AG04449 (cell line): ENCODE measurements at regions of chr7 and their contacts with region 1.

Region 1: GRCh38 chr7:134432296-134433152 is 26.4 kb downstream of the AKR1B1 start:
- DNase-seq: no peak
- H3K4me3 ChIP-seq: peak overlapping the region; percentile 53
- CTCF ChIP-seq: peak; percentile 74

Region 2: DNA sequence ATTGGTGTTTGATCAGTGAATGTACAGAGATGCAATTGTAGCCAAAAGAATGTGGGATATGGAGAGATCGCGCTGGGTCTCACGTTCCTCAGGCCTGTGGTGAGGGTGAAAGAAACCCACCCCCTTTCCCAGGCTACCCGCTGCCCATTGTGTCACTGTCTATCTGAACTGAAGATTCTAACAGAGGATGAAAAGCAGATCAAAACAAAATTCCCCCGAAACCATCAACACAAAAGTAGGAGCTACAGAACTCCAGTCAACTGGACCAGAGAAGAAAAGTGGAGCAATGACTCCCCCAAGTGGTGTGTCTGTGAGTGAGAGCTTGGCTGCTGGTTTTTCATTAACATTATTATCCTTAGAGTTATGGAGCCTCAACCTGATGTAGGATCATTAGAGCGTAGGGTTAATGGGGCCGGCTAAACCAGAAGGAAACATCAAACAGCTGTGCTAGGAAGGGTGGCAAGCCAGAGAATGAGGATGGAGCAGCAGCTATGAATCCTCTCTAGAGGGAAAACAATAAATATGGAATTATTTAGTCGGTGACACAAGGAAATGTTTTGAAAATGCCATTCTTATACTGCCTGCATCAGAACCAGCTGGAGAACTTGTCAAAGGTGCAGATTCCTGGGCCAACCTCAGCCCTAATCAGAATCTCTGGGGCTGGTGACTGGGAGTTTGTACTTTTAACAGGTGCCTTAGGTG is 11.9 kb before region 1 on chr7:
- CTCF ChIA-PET with region 1: interaction called, 34 read pairs
- POLR2A ChIA-PET with region 1: no interaction called
- DNase-seq: no peak
- H3K4me3 ChIP-seq: no peak overlapping the region
- CTCF ChIP-seq: peak; percentile 55

Region 3: GRCh38 chr7:134458806-134459698 is 26.5 kb after region 1 on chr7 and contains the start of gene AKR1B1:
- CTCF ChIA-PET with region 1: interaction called, 43 read pairs
- POLR2A ChIA-PET with region 1: no interaction called
- DNase-seq: peak; percentile 45
- H3K4me3 ChIP-seq: peak within 1 kb of the TSS; percentile 91
- CTCF ChIP-seq: peak; percentile 85

Region 4: GRCh38 chr7:134480736-134481135 is 48.2 kb after region 1 on chr7:
- CTCF ChIA-PET with region 1: interaction called, 92 read pairs
- POLR2A ChIA-PET with region 1: no interaction called
- DNase-seq: no peak
- H3K4me3 ChIP-seq: no peak overlapping the region
- CTCF ChIP-seq: no peak

Region 5: DNA sequence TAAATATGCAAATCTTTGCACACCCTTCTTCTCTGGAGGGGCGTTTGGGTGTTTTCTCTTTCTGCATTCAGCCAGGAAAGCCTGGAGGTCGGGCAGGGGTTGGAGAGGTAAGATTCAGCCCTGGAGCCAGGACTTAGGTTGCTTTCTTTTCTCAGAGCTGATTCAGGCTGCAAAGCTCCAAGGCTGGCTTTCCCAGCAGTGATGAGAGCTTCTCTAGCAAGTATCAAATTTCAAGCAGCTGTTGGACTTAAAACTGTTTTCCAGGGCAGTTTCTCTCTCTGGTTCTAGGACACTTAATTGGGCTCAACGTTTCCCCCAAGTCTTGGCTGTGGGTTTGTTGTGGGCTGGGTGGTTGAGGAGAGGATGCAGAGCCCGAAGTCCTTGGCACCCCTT is 95.5 kb after region 1 on chr7:
- CTCF ChIA-PET with region 1: interaction called, 11 read pairs
- POLR2A ChIA-PET with region 1: no interaction called
- DNase-seq: peak; percentile 64
- H3K4me3 ChIP-seq: peak overlapping the region; percentile 33; the same call in 1 of the 2 replicates
- CTCF ChIP-seq: no peak

Region 6: GRCh38 chr7:134599371-134599770 is 166.8 kb after region 1 on chr7:
- CTCF ChIA-PET with region 1: interaction called, 38 read pairs
- POLR2A ChIA-PET with region 1: no interaction called
- DNase-seq: no peak
- H3K4me3 ChIP-seq: no peak overlapping the region
- CTCF ChIP-seq: no peak